GM10248 (cell line): ENCODE measurements at regions of chr12 and their contacts with region 1.

Region 1: DNA sequence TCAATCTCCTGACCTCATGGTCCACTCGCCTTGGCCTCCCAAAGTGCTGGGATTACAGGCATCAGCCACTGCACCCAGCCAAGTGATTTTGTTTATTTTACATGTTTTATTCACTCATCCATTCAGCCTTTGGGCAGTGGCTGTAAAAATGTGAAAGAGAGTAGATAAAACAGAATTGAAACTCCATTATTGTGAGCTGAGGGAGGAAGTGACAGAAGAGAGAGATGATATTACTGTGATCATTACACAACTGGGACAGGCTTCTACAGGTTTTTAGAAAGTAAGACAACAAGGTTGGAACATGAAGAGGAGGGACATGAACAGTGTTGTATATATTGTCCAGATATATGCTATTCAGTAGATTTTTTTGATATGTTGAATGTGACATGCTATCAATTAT is 25.0 kb downstream of the CREBL2 start:
- DNase-seq: peak; percentile 65
- CTCF ChIP-seq: no peak

Region 2: DNA sequence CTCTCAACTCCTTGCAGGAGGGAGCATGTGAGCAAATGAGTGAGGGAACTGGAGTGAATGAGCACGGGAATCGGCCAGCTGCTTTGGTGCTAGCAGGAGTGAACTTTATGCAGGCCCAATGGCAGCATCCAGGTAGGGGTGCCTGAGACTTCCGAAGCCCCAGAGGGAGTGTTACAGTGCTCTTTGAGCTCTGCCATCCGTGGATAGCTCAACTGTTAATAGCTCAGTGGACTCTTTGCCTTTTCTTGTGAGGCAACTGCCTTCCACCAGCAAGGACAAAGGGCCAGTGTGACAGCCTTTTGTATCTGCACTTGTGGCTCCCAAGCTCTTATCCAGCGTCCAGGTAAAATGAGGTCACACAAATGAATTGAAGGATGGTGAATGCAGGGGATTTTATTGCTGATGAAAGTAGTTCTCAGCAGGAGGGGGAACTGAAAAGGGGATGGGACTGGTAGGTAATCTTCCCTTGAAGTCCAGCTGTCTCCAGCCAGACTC is 12.1 kb before region 1 on chr12:
- CTCF ChIA-PET with region 1: interaction called, 12 read pairs
- POLR2A ChIA-PET with region 1: no interaction called
- DNase-seq: no peak
- CTCF ChIP-seq: no peak

Region 3: GRCh38 chr12:12684375-12685106 is 47.9 kb after region 1 on chr12:
- CTCF ChIA-PET with region 1: no interaction called
- POLR2A ChIA-PET with region 1: no interaction called
- DNase-seq: no peak
- CTCF ChIP-seq: no peak

Region 4: DNA sequence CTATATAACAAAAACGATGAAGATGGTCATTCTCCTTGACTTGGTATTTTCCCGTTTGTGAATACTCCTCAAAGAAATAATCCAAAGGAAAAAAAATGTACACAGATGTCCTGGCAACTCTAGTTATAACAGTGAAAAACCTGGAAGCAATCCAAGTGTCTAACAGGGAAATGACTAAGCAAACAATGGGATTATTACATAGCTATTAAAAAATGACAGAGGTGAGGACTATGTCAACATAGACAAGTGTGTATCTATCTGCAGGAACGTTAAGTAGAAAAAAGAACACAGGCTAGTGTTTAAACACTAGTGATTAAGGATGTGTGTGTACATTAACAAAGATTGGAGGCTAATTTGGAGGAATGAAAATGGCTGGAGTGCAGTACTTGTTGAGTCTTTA is 142.9 kb after region 1 on chr12:
- CTCF ChIA-PET with region 1: no interaction called
- POLR2A ChIA-PET with region 1: no interaction called
- DNase-seq: no peak
- CTCF ChIP-seq: no peak